ENCODE measurements at regions of chr3 and their contacts with region 1.

Region 1: DNA sequence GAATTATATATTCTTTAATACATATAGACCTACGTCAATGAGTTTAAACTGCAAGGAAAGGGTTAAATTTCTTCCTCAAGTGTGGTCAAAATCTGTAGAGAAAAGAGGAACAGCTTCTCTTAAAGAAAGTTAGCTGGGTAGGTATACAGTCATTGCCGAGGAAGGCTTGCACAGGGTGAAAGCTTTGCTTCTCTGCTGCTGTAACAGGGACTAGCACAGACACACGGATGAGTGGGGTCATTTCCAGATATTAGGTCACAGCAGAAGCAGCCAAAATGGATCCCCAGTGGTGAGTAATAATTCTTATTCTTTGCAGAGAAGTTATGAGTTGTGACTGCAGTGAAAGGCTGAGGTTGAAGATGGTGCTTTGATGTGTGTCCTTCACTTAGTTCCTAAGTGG is at the start of gene CD86:
- DNase-seq: no peak
- H3K4me3 ChIP-seq: no peak within 1 kb of the TSS
- H3K27ac ChIP-seq: no peak within 1 kb of the TSS
- H3K4me1 ChIP-seq: no peaks in the 10 kb centered on the region
- H3K27me3 ChIP-seq: no peaks in the 10 kb centered on the region
- CTCF ChIP-seq: no peak
- total RNA-seq, gene CD86: 0.17 to 9.6 TPM

Region 2: DNA sequence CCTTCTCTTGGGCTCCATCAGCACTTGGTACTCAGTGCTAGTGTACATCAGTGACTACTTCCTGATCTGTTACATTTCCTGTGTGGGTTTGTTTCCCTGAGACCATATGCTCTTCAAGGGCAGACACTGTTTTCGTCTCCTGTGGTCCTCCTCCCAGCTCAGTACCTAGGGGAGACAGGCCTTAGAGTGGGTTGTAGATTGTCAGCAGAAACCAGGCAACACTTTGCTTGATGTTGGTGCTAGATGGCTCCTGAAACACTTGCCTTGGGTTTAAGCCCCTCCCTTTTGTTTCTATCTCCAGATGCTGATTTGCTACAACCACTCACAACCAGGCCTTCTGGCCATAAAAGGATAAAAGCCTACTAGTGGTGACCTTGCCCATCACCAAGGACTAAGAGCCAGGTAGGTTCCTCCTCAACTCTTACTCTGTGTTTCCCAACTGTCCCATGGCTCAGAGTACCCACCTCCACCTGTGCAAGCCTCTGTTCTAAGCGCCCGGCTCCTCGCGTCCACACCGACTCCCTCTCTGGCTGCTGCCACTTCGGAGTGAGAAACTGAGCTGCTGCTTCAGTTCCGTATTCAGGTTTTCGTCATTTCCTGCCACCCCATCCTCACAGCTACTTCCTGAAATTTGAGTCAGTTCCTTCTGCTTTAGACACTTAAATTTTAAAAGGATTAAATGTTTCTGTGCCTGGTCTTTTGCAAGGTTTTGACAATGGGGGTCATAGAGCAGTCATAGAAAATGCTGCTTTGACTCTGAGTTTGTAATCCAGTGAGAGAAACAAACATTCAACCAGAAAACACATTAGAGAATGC is 394.7 kb before region 1 on chr3 and contains the start of gene HCLS1:
- CTCF ChIA-PET with region 1: no interaction called
- dilution Hi-C with region 1: no loop called
- in situ Hi-C with region 1: no loop called
- intact Hi-C with region 1: no loop called
- DNase-seq: no peak
- H3K4me3 ChIP-seq: no peak within 1 kb of the TSS
- H3K27ac ChIP-seq: no peak within 1 kb of the TSS
- H3K4me1 ChIP-seq: peaks cover 11% of the 10 kb centered on the region
- H3K27me3 ChIP-seq: no peaks in the 10 kb centered on the region
- CTCF ChIP-seq: no peak
- total RNA-seq, gene HCLS1: 2.0 to 2.8 TPM

Region 3: GRCh38 chr3:122004991-122005565 is 50.1 kb before region 1 on chr3:
- CTCF ChIA-PET with region 1: no interaction called
- dilution Hi-C with region 1: loop called (anchors 5 kb)
- in situ Hi-C with region 1: no loop called
- intact Hi-C with region 1: no loop called
- DNase-seq: no peak
- H3K4me3 ChIP-seq: no peak overlapping the region
- H3K27ac ChIP-seq: no peak overlapping the region
- H3K4me1 ChIP-seq: peaks cover 19% of the 10 kb centered on the region
- H3K27me3 ChIP-seq: no peaks in the 10 kb centered on the region
- CTCF ChIP-seq: no peak

Region 4: DNA sequence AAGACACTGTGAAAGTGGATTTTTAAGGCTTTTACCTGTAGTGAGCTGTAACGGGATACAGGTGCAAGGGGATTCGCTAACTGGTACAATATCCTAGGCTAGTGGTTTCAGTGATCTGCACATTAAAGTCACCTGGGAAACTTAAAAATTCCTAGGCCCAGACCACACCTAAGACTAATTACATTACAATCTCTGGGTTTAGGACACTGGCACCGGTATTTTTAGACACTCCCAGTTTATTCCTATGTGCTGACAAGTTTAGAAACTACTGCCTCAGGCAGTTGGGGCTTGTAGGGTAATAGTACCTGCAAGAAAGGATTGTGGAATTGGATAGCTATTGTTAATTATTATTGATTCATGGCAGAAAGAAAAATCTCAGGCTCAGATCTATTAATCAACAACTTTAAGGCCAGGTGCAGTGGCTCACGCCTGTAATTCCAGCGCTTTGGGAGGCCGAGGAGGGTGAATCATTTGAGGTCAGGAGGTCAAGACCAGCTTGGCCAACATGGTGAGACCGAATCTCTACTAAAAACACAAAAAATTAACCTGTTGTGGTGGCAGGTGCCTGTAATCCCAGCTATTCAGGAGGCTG is 77.8 kb after region 1 on chr3:
- CTCF ChIA-PET with region 1: no interaction called
- dilution Hi-C with region 1: no loop called
- in situ Hi-C with region 1: no loop called
- intact Hi-C with region 1: no loop called
- DNase-seq: peak; percentile 26
- H3K4me3 ChIP-seq: no peak overlapping the region
- H3K27ac ChIP-seq: no peak overlapping the region
- H3K4me1 ChIP-seq: peaks cover 8% of the 10 kb centered on the region
- H3K27me3 ChIP-seq: no peaks in the 10 kb centered on the region
- CTCF ChIP-seq: no peak

Measured in mammary epithelial cell (primary cell).